ENCODE measurements at regions of chr22 and their contacts with region 1.

Region 1: GRCh38 chr22:17767233-17768065 is 6.8 kb downstream of the BID start:
- DNase-seq: peak; percentile 78
- ATAC-seq: peak; percentile 86
- H3K4me3 Mint-ChIP-seq: peak overlapping the region; percentile 50
- H3K27ac Mint-ChIP-seq: peak overlapping the region; percentile 55
- H3K4me1 Mint-ChIP-seq: peaks cover 54% of the 10 kb centered on the region
- H3K27me3 Mint-ChIP-seq: peaks cover 7% of the 10 kb centered on the region

Region 2: DNA sequence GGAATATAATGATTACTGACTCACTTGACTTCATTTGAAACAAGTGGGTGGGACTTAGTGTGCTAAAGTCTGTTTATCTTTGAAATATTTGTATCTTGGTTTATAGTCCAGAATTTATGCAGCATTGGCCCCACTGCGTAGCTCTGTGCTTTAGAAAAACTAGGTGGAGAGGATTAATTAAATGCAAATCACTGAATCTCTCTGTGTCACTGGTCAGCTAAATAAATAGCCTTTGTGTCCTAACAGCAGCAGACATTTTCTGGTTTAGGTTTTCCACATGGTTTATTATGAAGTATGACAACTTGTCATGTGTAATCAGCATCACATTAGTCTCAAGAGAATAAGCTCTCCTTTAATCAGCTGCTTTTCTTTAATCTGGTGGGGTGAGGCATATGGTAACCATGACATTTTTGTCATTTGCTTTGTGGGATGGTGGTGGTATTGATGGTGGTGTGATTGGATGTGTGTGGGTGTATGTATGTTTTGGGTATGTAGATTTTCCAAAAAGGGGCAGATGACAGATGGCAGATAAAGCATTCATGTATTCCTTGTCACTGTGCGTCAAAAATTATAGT is 94.9 kb before region 1 on chr22:
- CTCF ChIA-PET with region 1: interaction called, 3 read pairs
- POLR2A ChIA-PET with region 1: no interaction called
- intact Hi-C with region 1: loop called in 1 of 2 experiments (anchors 1 kb)
- DNase-seq: peak; percentile 24
- ATAC-seq: peak; percentile 63
- H3K4me3 Mint-ChIP-seq: no peak overlapping the region
- H3K27ac Mint-ChIP-seq: peak overlapping the region; percentile 66
- H3K4me1 Mint-ChIP-seq: peaks cover 19% of the 10 kb centered on the region
- H3K27me3 Mint-ChIP-seq: no peaks in the 10 kb centered on the region

Region 3: DNA sequence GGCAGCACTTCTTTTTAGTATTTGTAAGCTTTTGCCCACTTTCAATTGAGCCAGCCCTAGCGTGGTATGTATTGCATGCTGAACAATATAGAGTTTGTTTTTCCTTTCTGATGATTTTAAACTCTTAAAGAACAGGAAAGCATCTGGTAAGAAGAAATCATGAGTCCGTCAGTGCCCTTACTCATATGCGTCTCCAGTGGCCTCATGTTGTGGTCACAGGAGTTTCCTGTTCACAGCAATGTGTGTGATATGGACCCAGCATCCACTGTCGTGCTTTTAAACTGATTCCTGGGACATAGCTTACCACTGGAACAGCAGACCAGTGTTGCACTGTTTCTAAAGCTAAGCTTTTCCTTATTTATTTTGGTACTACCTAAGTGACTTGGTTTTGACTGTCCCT is 33.3 kb before region 1 on chr22:
- CTCF ChIA-PET with region 1: no interaction called
- POLR2A ChIA-PET with region 1: interaction called, 3 read pairs
- intact Hi-C with region 1: loop called in 1 of 2 experiments (anchors 5 kb)
- DNase-seq: peak; percentile 60
- ATAC-seq: peak; percentile 95
- H3K4me3 Mint-ChIP-seq: no peak overlapping the region
- H3K27ac Mint-ChIP-seq: peak overlapping the region; percentile 86
- H3K4me1 Mint-ChIP-seq: peaks cover 15% of the 10 kb centered on the region
- H3K27me3 Mint-ChIP-seq: no peaks in the 10 kb centered on the region

Region 4: GRCh38 chr22:18091916-18092526 is 324.6 kb after region 1 on chr22:
- CTCF ChIA-PET with region 1: no interaction called
- POLR2A ChIA-PET with region 1: no interaction called
- intact Hi-C with region 1: loop called in 1 of 2 experiments (anchors 5 kb)
- DNase-seq: peak; percentile 59
- ATAC-seq: peak; percentile 61
- H3K4me3 Mint-ChIP-seq: peak overlapping the region; percentile 57
- H3K27ac Mint-ChIP-seq: peak overlapping the region; percentile 80
- H3K4me1 Mint-ChIP-seq: peaks cover 65% of the 10 kb centered on the region
- H3K27me3 Mint-ChIP-seq: no peaks in the 10 kb centered on the region